Naive thymus-derived CD8-positive, alpha-beta T cell (primary cell): ENCODE measurements at regions of chr12 and their contacts with region 1.

Region 1: DNA sequence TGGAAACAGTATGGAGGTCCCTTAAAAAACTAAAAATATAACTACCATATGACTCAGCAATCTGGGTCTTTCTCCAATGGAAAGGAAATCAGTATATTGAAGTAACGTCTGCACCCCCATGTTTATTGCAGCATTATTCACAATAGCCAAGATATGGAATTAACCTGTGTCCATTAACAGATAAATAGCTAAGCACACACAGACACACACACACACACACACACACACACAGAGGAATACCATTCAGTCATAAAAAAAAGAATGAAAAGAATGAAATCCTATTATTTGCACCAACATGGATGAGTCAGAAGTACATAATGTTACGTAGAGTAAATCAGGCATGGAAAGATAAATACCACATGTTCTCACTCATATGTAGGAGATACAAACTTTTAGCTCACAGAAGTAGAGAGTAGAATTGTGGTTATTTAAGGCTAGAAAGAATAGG is 4.7 kb downstream of the KLRK1 start:
- DNase-seq: no peak
- ATAC-seq: peak; percentile 24 to 40
- H3K4me3 Mint-ChIP-seq: peak overlapping the region; percentile 85 to 96 (median 90)
- H3K27ac Mint-ChIP-seq: peak overlapping the region; percentile 86 to 98 (median 94)
- H3K4me1 Mint-ChIP-seq: peaks cover 28 to 57% (median 36%) of the 10 kb centered on the region in 4 donors
- H3K27me3 Mint-ChIP-seq: no peaks in the 10 kb centered on the region

Region 2: DNA sequence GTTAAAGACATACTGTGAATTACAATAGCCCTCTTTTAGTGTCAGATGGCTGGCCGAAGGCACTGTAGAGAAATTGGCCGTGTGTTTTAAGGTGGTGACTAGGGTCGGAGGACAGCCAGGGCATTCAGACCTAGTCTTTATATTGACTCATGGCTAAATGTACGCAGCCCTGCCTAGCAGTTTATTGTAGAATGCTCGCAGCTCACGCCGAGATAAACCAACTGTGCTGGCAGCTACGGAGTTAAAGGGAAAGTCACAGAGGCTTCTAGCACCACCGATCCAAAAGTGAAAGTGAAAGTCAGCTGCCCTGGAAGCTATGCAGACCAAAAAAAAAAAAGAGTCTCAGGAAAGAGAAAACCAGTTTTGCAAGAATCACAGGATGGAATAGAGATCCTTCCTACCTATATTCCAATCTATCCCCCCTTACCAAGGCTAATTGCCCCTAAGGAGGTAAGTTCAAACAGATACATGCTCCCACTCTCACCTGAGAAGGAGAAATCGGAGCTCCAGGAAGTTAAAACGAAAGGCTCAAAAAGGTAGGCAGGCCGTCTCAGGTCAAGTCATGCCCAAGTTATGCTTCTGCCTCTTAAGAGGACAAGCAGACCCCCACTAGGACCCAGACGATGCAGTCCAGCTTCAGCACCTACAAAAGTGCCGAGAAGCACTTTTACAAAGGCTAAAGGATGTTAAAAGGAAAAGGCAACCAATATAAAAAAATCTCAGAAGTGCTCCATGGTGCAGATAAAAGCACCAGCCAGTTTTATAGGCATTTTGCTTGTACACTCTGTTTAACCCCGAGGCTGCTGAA is 20.2 kb before region 1 on chr12:
- POLR2A ChIA-PET with region 1: interaction called, 57 read pairs
- DNase-seq: peak; percentile 29 to 87 (median 72)
- ATAC-seq: peak; percentile 57 to 67
- H3K4me3 Mint-ChIP-seq: no peak overlapping the region
- H3K27ac Mint-ChIP-seq: no peak overlapping the region
- H3K4me1 Mint-ChIP-seq: peaks cover 7 to 41% (median 34%) of the 10 kb centered on the region in 4 donors
- H3K27me3 Mint-ChIP-seq: no peaks in the 10 kb centered on the region

Region 3: GRCh38 chr12:10372534-10372931 is 12.7 kb before region 1 on chr12:
- POLR2A ChIA-PET with region 1: interaction called, 57 read pairs
- DNase-seq: no peak
- ATAC-seq: peak; percentile 38 to 43
- H3K4me3 Mint-ChIP-seq: peak overlapping the region; percentile 38 to 87 (median 78)
- H3K27ac Mint-ChIP-seq: peak overlapping the region in 7 of 10 donors; percentile 84 to 97 (median 93)
- H3K4me1 Mint-ChIP-seq: peaks cover 50 to 87% (median 70%) of the 10 kb centered on the region in 4 donors
- H3K27me3 Mint-ChIP-seq: no peaks in the 10 kb centered on the region

Region 4: GRCh38 chr12:10395390-10395998 is 10.3 kb after region 1 on chr12:
- POLR2A ChIA-PET with region 1: interaction called, 13 read pairs
- DNase-seq: peak in 6 of 10 donors; percentile 43 to 87 (median 69)
- ATAC-seq: peak; percentile 71 to 80
- H3K4me3 Mint-ChIP-seq: peak overlapping the region; percentile 63 to 91 (median 83)
- H3K27ac Mint-ChIP-seq: peak overlapping the region; percentile 97 to 100 (median 99)
- H3K4me1 Mint-ChIP-seq: peaks cover 35 to 78% (median 70%) of the 10 kb centered on the region in 4 donors
- H3K27me3 Mint-ChIP-seq: no peaks in the 10 kb centered on the region

Region 5: DNA sequence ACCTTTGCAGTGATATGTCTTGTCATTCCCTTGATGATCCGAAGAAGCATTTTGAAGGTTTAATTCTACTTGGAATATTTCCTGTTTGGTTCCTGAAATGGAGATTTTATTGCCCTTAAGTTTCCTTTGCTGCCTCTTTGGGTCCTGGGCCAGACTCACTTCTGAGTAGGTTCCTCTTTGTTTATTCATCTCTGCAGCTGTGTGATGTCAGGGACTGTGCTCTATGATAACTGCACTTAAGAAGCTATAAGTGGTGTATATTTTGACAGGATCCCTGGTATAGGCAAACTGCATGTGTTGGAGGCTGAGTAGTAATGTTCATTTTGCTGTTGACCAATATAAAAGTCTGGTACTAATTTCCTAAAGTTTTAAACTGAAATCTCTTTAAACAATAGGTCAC is 24.2 kb after region 1 on chr12 and contains the start of gene KLRC4:
- POLR2A ChIA-PET with region 1: interaction called, 15 read pairs
- DNase-seq: peak in 6 of 10 donors; percentile 7 to 68 (median 52)
- ATAC-seq: peak; percentile 81 to 89
- H3K4me3 Mint-ChIP-seq: peak within 1 kb of the TSS; percentile 86 to 97 (median 90)
- H3K27ac Mint-ChIP-seq: peak within 1 kb of the TSS; percentile 38 to 98 (median 92)
- H3K4me1 Mint-ChIP-seq: peaks cover 9 to 36% (median 25%) of the 10 kb centered on the region in 4 donors
- H3K27me3 Mint-ChIP-seq: no peaks in the 10 kb centered on the region
- polyA plus RNA-seq, gene KLRC4: 1.3 to 31.8 (median 13.6) TPM

Region 6: GRCh38 chr12:10466311-10466710 is 81.1 kb after region 1 on chr12:
- POLR2A ChIA-PET with region 1: no interaction called
- DNase-seq: no peak
- ATAC-seq: no peak
- H3K4me3 Mint-ChIP-seq: no peak overlapping the region
- H3K27ac Mint-ChIP-seq: no peak overlapping the region
- H3K4me1 Mint-ChIP-seq: peaks cover 11 to 26% (median 14%) of the 10 kb centered on the region in 4 donors
- H3K27me3 Mint-ChIP-seq: no peaks in the 10 kb centered on the region

Region 7: GRCh38 chr12:10562306-10562933 is 177.2 kb after region 1 on chr12:
- POLR2A ChIA-PET with region 1: interaction called, 39 read pairs
- DNase-seq: peak in 7 of 10 donors; percentile 29 to 74 (median 49)
- ATAC-seq: no peak
- H3K4me3 Mint-ChIP-seq: peak overlapping the region in 8 of 10 donors; percentile 5 to 94 (median 50)
- H3K27ac Mint-ChIP-seq: peak overlapping the region; percentile 79 to 97 (median 93)
- H3K4me1 Mint-ChIP-seq: peaks cover 33 to 85% (median 77%) of the 10 kb centered on the region in 4 donors
- H3K27me3 Mint-ChIP-seq: no peaks in the 10 kb centered on the region